Activated CD8-positive, alpha-beta T cell treated with anti-CD3 and anti-CD28 coated beads for 36 hours (primary cell): ENCODE measurements at regions of chr7 and their contacts with region 1.

Region 1: DNA sequence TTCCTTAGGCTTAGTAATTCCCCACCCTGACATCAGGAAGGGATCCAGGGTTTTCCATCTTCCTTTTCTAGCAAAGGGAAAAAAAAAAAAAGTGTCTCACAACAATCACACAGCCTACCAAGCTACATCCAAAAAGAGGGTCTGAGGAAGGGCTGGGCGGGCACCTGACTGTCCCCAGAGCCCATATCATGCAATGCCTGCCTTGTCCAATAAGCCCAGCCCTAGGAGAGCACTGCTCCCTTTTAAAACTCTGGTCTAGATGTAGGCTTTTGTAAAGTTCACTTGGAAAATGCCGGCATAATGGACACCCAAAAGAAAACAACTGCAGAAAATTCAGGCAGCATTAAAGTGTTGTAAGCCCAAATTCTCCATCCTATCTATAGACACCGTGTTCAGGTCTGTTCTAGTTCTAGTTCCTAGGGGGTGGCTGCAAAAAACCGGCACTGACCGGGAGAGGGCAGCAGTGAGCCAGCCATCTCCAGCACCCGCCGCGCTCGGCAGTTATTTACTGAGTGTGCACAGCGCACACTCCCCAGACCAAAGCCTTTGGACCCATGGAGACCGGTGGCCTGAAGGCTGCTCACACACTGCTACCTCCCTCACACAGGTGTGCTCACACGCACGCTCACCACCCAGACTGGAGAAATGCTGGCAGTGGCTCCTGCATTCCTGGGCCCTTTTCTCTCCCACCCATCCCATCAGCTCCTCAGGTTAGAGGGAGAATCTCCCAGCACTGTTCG is 48.7 kb downstream of the PODXL start:
- DNase-seq: peak; percentile 89
- ATAC-seq: peak; percentile 92
- H3K4me3 Mint-ChIP-seq: peak overlapping the region; percentile 3
- H3K27ac Mint-ChIP-seq: no peak overlapping the region
- H3K4me1 Mint-ChIP-seq: peaks cover 22% of the 10 kb centered on the region
- H3K27me3 Mint-ChIP-seq: peaks cover 6% of the 10 kb centered on the region
- CTCF ChIP-seq: peak; percentile 74

Region 2: DNA sequence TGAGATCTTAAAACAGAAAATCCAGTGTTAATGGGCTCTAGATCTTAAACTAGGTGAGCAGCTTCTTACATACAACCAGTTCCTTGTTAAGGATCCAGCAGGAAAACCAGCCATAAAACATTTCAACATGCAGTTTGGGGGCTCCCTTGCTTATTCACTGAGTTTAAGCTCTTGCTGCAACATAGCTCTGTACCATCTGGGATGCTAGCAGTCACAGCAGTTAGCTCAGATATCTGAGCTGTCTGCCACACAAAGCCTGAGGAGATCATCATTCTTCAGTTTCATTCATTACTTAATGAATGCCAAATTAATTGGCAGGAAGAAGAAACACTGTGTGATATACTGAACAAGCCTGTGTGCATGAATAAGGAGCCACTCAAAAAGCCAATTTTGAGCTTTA is 14.2 kb before region 1 on chr7:
- CTCF ChIA-PET with region 1: interaction called, 25 read pairs
- POLR2A ChIA-PET with region 1: no interaction called
- intact Hi-C with region 1: no loop called
- DNase-seq: no peak
- ATAC-seq: no peak
- H3K4me3 Mint-ChIP-seq: no peak overlapping the region
- H3K27ac Mint-ChIP-seq: no peak overlapping the region
- H3K4me1 Mint-ChIP-seq: no peaks in the 10 kb centered on the region
- H3K27me3 Mint-ChIP-seq: no peaks in the 10 kb centered on the region
- CTCF ChIP-seq: no peak